Posterior vena cava (tissue), 2 donors: ENCODE measurements at regions of chr20 and their contacts with region 1.

Region 1: GRCh38 chr20:60210779-60211617 is 252.8 kb downstream of the CDH26 start:
- DNase-seq: peak; percentile 90

Region 2: DNA sequence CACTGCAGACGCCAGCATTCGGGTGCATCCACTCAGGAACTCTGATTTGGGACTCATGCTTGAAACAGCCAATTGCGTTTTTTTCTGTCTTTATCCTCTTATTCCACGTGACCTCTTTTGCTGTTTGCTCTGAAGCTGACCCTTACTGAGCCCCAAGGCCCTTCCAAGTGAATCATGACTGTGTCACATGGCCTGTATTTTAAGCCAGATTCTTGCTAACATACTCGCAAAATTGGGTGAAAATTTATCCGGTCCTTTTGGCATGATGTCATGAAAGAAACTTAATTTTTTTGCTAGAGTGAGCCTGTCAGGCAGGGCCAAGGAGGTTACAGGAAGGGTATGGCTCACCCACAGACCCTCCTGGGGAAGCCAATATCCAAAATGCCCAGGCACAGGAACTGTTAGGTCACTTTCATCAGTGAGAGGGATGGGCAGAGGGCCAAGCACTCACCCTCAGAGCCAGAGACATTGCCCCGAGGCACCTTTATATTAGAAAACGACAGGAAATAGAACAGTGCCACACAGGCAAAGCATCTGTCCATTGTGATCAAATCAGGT is 43.9 kb after region 1 on chr20:
- intact Hi-C with region 1: no loop called
- DNase-seq: no peak

Region 3: GRCh38 chr20:60424267-60424902 is 213.4 kb after region 1 on chr20:
- intact Hi-C with region 1: no loop called
- DNase-seq: no peak

Region 4: DNA sequence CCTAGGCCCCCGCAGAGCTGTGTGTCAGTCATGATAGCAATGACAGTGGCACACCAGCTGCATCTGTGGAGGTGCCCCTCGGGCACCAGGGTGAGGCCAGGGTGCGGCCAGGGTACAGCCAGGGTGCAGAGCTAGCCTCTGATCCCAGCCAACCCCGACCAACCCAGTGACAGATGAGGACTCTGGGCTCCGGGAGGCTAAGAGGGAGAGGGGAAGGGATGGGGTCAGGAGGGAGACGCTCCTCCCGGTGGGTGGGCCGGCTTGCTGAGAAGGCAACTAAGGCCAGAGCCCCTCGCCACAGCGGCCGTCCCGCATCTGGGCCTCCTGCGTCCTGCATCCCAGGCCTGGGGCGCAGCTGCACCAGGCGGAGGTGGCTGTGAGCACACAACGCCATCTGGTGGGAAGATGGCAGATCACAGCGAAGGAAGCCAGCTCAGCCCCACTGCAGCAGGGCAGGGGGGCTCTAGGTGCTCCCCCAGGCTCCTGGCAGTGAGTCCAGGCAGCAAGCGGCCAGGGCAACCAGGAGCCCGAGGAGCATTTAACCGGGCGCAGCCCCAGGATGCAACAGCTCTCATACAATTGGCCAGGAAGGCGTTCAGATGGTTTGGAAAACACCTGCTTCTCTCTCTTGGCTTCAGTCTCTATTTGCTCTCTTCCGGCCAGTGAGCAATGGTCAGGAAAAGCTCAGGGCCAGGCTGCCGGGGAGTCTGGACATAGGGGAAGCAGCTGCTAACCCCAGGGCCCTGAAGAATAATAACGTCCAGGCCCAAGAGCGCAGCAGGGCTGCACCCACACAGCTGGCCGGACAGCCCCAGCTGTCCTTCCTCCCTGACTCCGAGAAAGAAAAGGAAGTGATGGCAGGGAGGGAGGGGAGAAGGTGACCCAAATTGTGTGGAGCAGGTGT is 1685.3 kb after region 1 on chr20:
- intact Hi-C with region 1: loop called in 1 of 2 experiments (anchors 10 kb)
- DNase-seq: no peak